Caco-2 (cell line): ENCODE measurements at regions of chr6 and their contacts with region 1.

Region 1: DNA sequence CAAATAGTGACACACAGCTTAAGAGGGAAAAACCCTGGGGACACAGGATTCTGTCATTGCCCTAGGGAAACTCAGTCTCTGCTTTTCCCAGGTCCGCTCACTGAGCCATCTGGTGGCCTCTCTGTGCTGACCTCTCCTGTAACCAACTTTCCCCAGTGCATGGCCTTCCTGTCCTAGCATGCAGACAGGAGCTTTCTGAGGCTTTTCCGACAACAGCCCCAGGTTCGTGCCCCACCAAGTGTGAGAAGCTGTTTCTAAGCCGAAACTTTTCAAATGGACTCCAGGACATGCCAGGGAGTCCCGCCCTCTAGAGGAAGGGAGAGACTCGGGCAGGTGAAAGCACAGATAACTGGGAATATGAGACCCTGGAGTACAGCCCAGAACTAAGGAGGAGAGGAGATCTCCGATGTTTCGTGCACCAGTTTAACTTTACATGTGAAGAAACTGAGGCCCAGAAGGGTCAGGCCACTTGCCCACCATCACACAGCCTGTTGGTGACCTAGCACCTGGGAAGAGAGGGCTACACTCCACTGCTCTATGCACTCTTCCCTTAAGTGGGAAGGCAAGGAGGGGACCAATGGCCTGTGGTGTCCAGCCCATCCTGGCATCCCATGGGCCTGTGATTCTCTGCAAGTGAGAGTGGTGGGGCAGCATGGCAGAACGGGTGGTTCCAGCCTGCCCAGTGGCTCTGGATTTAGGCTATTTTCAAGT is 46.2 kb downstream of the RPP40 start:
- DNase-seq: peak; percentile 45 to 47
- H3K4me3 ChIP-seq: no peak overlapping the region
- H3K4me3 Mint-ChIP-seq: no peak overlapping the region
- H3K27ac Mint-ChIP-seq: no peak overlapping the region
- H3K4me1 ChIP-seq: no peaks in the 10 kb centered on the region
- H3K4me1 Mint-ChIP-seq: no peaks in the 10 kb centered on the region
- H3K27me3 ChIP-seq: no peaks in the 10 kb centered on the region
- H3K27me3 Mint-ChIP-seq: peaks cover 2% of the 10 kb centered on the region
- CTCF ChIP-seq: peak in 1 of 2 experiments; percentile 45

Region 2: DNA sequence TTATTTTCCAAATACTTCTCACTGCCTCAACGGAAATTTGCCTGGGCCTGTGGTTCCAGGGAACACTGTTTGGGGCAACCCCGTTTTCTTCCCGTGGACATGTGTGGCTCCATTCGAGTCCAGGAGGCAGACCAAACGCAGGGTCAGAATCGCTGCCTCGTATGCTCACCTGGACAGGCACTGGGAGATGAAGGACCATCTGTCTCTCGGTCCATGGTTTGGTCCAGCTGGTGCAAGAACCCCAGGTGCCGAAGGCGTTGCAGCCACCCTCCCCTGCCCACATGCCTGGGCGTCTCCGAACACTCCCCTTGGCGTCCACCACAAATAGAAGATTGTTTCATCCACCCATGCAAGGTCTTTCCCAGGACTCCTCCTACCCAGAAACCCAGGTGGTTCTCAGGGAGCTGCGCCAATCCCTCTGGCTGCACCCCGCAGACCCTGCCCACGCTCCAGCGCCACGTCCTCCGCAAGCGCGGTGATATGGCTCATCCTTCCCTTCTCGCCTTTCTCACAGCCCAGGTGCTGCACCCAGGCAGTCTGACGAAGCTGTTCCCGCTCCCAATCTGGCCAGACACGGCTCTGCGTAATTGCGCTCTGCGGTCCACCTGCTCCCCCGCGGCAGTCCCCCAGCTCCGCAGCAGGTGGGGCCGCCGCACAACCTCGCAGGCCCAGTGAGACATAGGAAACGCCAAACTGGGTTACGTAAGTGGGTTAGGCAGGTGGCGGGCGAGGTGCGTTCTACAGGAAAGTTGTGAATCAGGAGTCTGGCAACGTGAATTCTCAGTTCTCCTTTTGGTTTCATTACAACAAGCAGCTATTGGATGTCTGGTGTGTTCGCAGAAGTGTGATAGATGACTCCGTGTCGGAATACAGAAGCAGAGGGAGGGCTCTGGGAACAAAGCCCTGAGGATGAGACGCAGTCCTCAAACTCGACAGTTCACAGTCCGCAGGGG is 676.1 kb before region 1 on chr6:
- CTCF ChIA-PET with region 1: no interaction called
- POLR2A ChIA-PET with region 1: no interaction called
- intact Hi-C with region 1: loop called (anchors 5 kb)
- DNase-seq: peak; percentile 61 to 66
- H3K4me3 ChIP-seq: peak overlapping the region; percentile 10
- H3K4me3 Mint-ChIP-seq: peak overlapping the region; percentile 67
- H3K27ac Mint-ChIP-seq: no peak overlapping the region
- H3K4me1 ChIP-seq: no peaks in the 10 kb centered on the region
- H3K4me1 Mint-ChIP-seq: no peaks in the 10 kb centered on the region
- H3K27me3 ChIP-seq: peaks cover 3% of the 10 kb centered on the region
- H3K27me3 Mint-ChIP-seq: peaks cover 14% of the 10 kb centered on the region
- CTCF ChIP-seq: peak; percentile 47 to 76

Region 3: DNA sequence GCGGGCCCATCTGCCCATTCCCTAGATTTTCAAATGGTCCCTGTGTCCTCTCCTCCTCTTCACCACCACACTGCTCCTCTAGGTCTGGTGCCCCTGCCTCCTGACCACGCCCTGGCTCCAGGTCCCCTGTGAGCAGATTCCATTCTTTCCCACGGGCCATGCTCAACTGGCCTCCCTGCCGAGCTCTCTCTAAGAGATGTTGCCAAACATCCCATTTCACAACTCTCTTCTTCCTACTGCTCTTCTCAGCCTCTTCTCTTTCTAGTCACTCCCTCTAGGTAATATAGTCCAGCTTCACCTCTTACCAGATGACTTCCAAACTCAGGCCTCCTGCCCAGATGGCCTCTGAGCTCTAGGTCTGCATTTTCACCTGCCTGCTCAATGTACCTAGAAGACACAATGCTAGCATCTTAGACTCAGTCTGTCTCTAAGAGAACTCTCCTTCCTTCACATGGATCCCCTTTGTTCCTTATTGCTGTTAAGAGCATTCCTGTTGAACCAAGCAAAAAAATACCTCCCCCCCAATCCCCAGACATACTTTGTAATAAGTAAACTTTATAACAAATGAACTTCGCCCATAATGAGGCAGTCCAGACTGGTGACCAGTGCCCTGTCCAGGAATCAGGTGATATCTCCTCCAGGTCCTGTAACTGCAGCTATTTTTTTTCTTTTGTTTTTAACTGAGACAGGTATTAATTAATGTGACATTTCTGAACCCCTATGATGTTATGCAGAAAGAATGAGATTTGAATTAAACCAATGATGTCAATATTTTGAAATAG is 224.0 kb after region 1 on chr6:
- CTCF ChIA-PET with region 1: no interaction called
- POLR2A ChIA-PET with region 1: no interaction called
- intact Hi-C with region 1: no loop called
- DNase-seq: no peak
- H3K4me3 ChIP-seq: no peak overlapping the region
- H3K4me3 Mint-ChIP-seq: no peak overlapping the region
- H3K27ac Mint-ChIP-seq: no peak overlapping the region
- H3K4me1 ChIP-seq: 0 out of 2 replicates have a peak, but pooled peaks cover 11% of the 10 kb centered on the region
- H3K4me1 Mint-ChIP-seq: peaks cover 17% of the 10 kb centered on the region
- H3K27me3 ChIP-seq: no peaks in the 10 kb centered on the region
- H3K27me3 Mint-ChIP-seq: no peaks in the 10 kb centered on the region
- CTCF ChIP-seq: no peak